Activated T-helper 1 cell treated with anti-CD3 and anti-CD28 coated beads, Interleukin-12 subunit alpha, Interleukin-12 subunit beta, Interleukin-2, Interleukin-4 antibody, amounts not matched to agents 30 ng/mL and 10 ng/mL and 1 ng/mL, durations not matched to agents 14 hours and 24 hours and 36 hours (primary cell): ENCODE measurements at regions of chr10 and their contacts with region 1.

Region 1: DNA sequence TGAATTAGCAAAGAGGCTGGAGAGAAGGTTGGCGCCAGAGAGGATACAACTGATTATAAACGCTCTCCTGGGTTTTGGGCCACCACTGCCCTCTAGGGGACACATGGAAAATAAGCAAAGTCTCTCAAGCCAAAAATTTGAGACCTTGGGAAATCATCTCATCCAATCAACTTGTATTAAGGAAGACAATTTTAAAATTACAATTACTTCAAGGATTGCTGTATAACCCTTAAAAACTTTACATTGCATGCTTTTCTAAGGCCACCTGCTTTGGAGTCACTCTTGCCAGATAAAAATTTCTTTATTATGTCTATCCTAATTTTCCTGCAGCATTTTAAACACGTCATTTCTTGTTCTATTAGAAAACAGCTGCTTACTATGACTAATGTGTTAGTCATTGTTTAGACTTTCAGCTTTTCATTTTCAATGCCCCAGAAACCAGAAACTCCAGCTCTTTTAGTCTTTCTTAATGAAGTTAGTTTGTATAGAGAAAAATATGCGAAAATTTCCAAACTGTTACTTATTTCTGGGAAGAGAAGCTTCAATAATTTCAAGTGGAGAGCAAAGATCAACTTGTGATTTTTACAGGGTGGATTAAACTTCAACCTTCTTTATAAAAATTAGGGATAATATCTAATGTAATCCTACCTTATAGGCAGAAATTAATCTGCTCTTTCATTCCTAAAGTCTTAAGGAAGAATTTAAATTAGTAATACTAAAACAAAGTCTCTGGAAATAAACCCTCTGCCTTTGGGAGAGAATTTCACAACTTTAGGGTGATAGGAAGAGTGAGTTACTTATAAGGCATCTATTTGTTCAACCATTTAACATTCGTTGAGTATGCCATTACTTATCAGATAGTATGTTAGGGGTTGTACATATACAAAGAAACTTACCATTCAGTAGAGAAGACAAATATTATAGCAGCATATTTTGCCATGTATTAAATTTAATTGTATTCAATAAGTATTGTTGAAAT is 20.6 kb upstream of the RHOBTB1 start:
- DNase-seq: peak; percentile 23
- H3K4me3 Mint-ChIP-seq: no peak overlapping the region
- H3K27ac Mint-ChIP-seq: no peak overlapping the region
- H3K4me1 Mint-ChIP-seq: peaks cover 34% of the 10 kb centered on the region
- H3K27me3 Mint-ChIP-seq: peaks cover 18% of the 10 kb centered on the region

Region 2: DNA sequence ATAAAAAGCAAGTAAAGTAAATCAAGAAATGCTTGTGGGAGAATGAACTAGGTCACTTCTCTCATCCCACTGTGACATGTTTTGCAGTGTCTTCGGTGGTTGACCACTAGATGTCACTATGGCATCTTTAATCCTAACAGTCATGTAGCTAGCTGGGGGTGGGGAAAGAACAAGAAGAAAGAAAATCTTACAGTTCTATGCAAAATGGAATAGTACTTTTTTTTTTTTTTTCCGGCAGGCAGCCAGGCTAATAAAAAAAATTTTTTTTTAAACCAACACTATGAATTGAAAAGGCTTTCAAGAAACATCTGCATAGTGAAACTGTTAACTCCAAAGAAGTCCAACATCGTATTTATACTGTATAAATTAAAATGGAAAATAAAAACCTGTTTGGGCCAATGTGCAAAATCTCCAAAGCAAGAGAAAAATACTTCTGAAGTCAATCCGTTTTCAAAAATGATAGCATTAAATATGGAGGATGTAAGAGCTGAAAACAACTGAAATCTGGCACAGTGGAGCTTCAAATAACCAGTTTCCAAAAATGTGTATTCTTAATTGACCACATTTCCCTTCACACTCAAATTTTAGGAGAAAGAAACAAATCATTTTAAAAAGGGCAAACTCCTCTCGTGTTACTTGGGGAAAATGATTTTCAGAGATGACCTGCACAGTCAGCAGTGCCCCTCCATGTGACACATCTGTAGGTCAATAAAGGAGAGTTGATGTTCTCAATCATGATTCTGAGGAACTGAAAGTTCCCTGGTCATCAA is 147.7 kb before region 1 on chr10:
- intact Hi-C with region 1: loop called (anchors 1 kb)
- DNase-seq: no peak
- H3K4me3 Mint-ChIP-seq: no peak overlapping the region
- H3K27ac Mint-ChIP-seq: no peak overlapping the region
- H3K4me1 Mint-ChIP-seq: peaks cover 9% of the 10 kb centered on the region
- H3K27me3 Mint-ChIP-seq: peaks cover 17% of the 10 kb centered on the region

Region 3: GRCh38 chr10:60883187-60883586 is 81.4 kb before region 1 on chr10:
- intact Hi-C with region 1: loop called (anchors 1 kb)
- DNase-seq: no peak
- H3K4me3 Mint-ChIP-seq: no peak overlapping the region
- H3K27ac Mint-ChIP-seq: no peak overlapping the region
- H3K4me1 Mint-ChIP-seq: no peaks in the 10 kb centered on the region
- H3K27me3 Mint-ChIP-seq: peaks cover 2% of the 10 kb centered on the region

Region 4: DNA sequence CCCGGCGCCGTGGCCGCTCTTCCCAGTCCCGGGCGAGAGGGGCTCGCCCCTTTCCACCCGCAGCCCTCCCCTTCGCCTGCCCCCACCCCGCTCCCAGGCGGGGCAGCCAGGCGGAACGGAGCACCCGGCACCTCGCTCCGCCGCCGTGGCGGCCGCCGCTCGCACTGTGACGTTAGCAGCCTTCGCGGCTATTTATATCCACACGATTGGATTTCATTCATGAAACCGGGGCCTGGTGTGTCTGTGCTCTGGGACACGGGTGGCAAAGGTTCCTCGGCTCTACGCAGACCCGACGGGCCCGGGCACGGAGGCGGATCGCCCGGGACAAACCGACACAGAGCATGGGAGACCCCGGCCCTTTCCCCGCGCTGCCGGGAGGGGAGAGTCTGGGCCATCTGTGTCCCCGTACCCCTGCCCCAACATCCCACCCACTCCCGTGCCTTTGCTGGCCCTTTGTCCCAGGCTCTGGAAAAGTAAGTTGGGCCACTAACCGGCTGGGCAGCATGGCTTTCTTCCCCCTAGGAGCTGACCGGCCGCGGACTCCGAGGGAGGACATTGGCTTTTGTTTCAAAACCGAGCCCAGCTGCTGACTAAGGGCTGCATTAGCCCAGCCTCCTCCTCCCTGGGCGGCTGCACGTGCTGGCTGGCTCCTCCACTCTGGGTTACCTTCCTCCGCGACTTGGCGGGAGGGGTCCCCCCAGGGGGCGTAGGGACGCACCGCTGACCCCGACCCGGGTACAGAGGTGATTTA is 20.2 kb before region 1 on chr10 and contains the start of gene RHOBTB1:
- intact Hi-C with region 1: loop called (anchors 1 kb)
- DNase-seq: no peak
- H3K4me3 Mint-ChIP-seq: peak within 1 kb of the TSS; percentile 74
- H3K27ac Mint-ChIP-seq: peak within 1 kb of the TSS; percentile 77
- H3K4me1 Mint-ChIP-seq: peaks cover 9% of the 10 kb centered on the region
- H3K27me3 Mint-ChIP-seq: peaks cover 73% of the 10 kb centered on the region
- total RNA-seq, gene RHOBTB1: not detected in 2 replicates

Region 5: GRCh38 chr10:60974463-60975149 is 10.1 kb after region 1 on chr10:
- intact Hi-C with region 1: loop called (anchors 1 kb)
- DNase-seq: no peak
- H3K4me3 Mint-ChIP-seq: no peak overlapping the region
- H3K27ac Mint-ChIP-seq: no peak overlapping the region
- H3K4me1 Mint-ChIP-seq: peaks cover 15% of the 10 kb centered on the region
- H3K27me3 Mint-ChIP-seq: peaks cover 4% of the 10 kb centered on the region

Region 6: DNA sequence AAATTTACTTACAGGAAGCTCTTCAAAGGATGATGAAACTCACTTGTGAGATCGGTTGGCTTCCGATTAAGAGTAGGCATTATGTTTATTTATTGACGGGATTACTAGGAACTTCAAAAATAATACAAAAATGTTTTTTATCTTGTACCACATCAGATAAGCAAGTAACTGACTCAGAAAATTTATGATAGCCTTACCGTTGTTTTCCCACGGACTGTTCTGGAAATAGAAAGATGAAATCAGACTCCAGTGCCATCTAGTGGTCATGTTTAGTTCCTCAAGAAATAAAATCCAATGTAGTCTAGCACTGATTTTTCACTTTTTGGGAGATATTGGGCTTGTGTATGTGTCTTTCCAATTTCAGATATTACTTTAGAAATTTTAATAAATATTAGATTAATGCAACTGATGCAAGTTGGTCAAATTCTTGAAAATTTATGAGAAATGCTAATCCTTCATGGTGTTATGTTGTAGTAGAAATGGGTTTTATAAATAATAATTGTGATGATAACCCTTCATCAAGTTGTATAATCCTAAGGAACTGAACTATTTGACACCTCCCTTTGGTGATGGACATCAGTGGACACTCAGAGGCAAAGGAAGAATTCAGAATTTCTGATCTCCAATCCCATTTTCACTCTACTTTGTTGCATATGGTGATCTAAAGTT is 319.8 kb after region 1 on chr10:
- intact Hi-C with region 1: loop called (anchors 1 kb)
- DNase-seq: no peak
- H3K4me3 Mint-ChIP-seq: no peak overlapping the region
- H3K27ac Mint-ChIP-seq: no peak overlapping the region
- H3K4me1 Mint-ChIP-seq: peaks cover 25% of the 10 kb centered on the region
- H3K27me3 Mint-ChIP-seq: peaks cover 15% of the 10 kb centered on the region